Posterior cingulate gyrus (tissue), 11 donors: ENCODE measurements at regions of chr7 and their contacts with region 1.

Region 1: DNA sequence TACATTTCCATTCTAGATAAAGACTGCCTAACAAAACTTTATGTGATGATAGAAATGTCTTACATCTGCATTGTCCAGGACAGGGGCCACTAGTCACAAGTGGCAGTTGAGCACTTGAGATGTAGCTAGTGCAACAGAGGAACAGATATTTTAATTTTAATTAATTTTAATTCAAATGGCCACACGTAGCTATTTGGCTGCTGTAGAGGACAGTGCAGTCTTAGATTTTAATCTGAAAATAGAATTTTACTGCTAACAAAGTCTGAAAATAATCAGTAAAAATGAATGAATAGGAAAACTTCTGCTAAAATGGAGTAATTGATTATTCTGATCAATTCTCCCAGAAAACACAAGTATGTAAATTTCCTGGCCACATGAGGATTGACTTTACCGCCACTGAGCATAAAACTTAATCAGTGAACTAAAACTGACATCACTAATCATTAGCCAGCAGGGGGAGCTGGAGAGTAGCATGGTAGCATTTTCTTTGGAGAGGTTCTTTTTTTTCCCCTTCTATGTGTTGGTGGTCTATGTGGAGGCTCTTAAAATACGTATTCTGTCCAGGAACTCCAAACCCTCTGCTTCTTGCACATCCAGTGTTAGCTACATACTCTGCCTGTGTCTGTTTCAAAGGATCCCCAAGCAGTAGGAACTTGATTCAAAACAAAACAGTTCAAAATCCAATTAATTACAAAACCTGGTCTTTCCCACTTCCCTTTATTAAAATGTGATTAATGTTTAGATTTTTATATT is 52.1 kb downstream of the TSPAN12 start:
- DNase-seq: peak in 3 of 10 donors; percentile 11 to 52 (median 40)

Region 2: DNA sequence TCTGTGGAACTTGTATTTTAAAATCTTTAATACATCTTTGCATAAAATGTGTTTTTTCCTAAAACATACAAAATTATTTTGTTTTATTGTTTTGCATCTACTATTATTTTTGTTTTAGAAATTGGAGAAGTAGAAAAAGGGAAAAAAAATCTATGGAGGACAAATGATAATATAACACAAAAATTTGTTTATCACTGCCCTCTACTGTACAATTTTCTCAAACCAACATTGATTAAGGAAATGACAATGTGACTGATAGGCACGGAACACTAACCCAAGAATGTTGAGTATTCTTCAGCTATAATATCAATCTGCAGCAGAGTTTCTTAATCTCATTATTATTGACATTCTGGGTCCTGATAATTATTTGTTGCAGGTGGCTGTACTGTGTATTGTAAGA is 135.3 kb after region 1 on chr7:
- intact Hi-C with region 1: loop called (anchors 1 kb)
- DNase-seq: no peak

Region 3: DNA sequence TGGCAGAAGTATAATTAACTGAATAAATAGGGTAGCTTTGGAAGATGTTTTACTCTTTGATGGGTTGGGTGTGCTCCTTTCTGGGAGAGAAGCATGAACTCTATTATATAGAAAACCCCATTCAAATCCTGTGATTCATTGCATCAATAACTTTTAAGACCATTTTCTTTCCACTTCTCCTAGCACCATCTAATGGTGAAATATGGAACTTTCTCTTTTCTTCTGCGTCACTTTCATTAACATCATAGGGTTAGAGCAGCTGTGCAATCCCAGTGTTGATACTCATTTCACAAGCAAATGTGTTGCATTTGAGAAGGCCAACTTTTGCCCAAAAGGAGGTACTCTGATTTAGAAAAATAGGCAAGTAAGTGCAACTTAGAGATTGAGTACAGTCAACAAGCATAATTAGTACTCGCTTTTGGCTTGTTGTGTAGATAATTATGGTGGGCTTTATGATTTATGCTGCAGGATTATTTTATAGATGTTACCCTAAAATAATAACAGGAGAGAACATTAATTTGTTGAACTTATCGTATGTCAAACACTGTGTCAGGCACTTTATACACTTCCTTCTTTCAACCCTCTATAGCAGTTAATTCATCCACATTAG is 275.6 kb after region 1 on chr7:
- intact Hi-C with region 1: loop called (anchors 5 kb)
- DNase-seq: no peak

Region 4: GRCh38 chr7:121107923-121108498 is 302.2 kb after region 1 on chr7:
- intact Hi-C with region 1: loop called (anchors 10 kb)
- DNase-seq: no peak